ENCODE measurements at regions of chr17 and their contacts with region 1.

Region 1: GRCh38 chr17:79272666-79273219 is 198.1 kb downstream of the ENGASE start:
- DNase-seq: peak in 1 of 10 donors; percentile 36

Region 2: GRCh38 chr17:79325709-79326430 is 53.1 kb after region 1 on chr17:
- intact Hi-C with region 1: loop called (anchors 2 kb)
- DNase-seq: peak in 3 of 10 donors; percentile 25 to 41 (median 39)

Measured in posterior cingulate gyrus (tissue), 11 donors.